Thyroid gland (tissue), 4 donors: ENCODE measurements at regions of chr13 and their contacts with region 1.

Region 1: GRCh38 chr13:86862137-86862536 is 809.0 kb upstream of the SLITRK5 start:
- DNase-seq: no peak
- H3K4me3 ChIP-seq: no peak overlapping the region
- H3K27ac ChIP-seq: no peak overlapping the region
- H3K4me1 ChIP-seq: no peaks in the 10 kb centered on the region
- H3K27me3 ChIP-seq: no peaks in the 10 kb centered on the region
- CTCF ChIP-seq: no peak
- POLR2A ChIP-seq: no peak

Region 2: GRCh38 chr13:86486582-86486981 is 375.6 kb before region 1 on chr13:
- intact Hi-C with region 1: no loop called
- DNase-seq: no peak
- H3K4me3 ChIP-seq: no peak overlapping the region
- H3K27ac ChIP-seq: no peak overlapping the region
- H3K4me1 ChIP-seq: no peaks in the 10 kb centered on the region
- H3K27me3 ChIP-seq: no peaks in the 10 kb centered on the region
- CTCF ChIP-seq: no peak
- POLR2A ChIP-seq: no peak

Region 3: GRCh38 chr13:87035526-87035925 is 173.4 kb after region 1 on chr13:
- intact Hi-C with region 1: no loop called
- DNase-seq: no peak
- H3K4me3 ChIP-seq: no peak overlapping the region
- H3K27ac ChIP-seq: no peak overlapping the region
- H3K4me1 ChIP-seq: no peaks in the 10 kb centered on the region
- H3K27me3 ChIP-seq: no peaks in the 10 kb centered on the region
- CTCF ChIP-seq: no peak
- POLR2A ChIP-seq: no peak

Region 4: DNA sequence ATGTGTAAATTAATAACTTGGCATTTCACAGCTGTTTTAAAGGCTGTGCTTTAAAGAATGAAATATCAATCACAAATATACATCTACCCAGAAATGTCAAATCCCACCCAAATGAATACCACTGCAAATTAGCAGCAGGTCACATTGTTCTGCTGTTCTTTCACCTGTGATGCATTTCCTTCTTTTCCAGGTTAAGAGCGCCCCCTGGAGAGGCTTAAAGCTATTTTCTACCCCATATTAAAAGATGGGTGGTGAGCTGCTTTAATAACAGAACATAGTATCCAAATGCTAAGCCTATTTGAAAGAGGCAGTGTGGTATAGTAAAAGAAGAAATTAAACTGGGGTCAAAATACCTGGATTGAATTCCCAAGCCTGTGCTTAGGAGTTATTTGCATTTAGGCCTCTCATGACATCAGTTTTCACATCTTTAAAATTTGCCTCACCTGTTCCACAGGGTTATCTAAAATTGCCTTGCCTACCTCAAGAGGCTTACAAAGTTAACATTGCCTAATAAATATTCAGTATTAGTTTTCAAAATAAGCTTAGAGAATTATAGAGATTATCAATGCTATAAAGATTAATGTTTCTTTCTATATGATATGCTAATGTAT is 412.2 kb after region 1 on chr13:
- intact Hi-C with region 1: loop called (anchors 10 kb)
- DNase-seq: peak; percentile 12 to 54
- H3K4me3 ChIP-seq: no peak overlapping the region
- H3K27ac ChIP-seq: no peak overlapping the region
- H3K4me1 ChIP-seq: no peaks in the 10 kb centered on the region
- H3K27me3 ChIP-seq: no peaks in the 10 kb centered on the region
- CTCF ChIP-seq: peak in 5 of 6 experiments; percentile 7 to 64 (median 58)
- POLR2A ChIP-seq: no peak